ENCODE measurements at regions of chr5 and their contacts with region 1.

Region 1: GRCh38 chr5:76256116-76256889 is 146.8 kb upstream of the IQGAP2 start:
- DNase-seq: peak; percentile 47 to 84
- ATAC-seq: peak; percentile 89 to 100 (median 97)
- H3K4me3 ChIP-seq: no peak overlapping the region
- H3K4me3 Mint-ChIP-seq: no peak overlapping the region
- H3K27ac ChIP-seq: no peak overlapping the region
- H3K27ac Mint-ChIP-seq: peak overlapping the region in 1 of 2 donors; percentile 39
- H3K4me1 ChIP-seq: peaks cover 9% of the 10 kb centered on the region
- H3K4me1 Mint-ChIP-seq: no peaks in the 10 kb centered on the region
- H3K27me3 ChIP-seq: no peaks in the 10 kb centered on the region
- H3K27me3 Mint-ChIP-seq: peaks cover 3 to 10% of the 10 kb centered on the region in 2 donors
- CTCF ChIP-seq: peak; percentile 76

Region 2: DNA sequence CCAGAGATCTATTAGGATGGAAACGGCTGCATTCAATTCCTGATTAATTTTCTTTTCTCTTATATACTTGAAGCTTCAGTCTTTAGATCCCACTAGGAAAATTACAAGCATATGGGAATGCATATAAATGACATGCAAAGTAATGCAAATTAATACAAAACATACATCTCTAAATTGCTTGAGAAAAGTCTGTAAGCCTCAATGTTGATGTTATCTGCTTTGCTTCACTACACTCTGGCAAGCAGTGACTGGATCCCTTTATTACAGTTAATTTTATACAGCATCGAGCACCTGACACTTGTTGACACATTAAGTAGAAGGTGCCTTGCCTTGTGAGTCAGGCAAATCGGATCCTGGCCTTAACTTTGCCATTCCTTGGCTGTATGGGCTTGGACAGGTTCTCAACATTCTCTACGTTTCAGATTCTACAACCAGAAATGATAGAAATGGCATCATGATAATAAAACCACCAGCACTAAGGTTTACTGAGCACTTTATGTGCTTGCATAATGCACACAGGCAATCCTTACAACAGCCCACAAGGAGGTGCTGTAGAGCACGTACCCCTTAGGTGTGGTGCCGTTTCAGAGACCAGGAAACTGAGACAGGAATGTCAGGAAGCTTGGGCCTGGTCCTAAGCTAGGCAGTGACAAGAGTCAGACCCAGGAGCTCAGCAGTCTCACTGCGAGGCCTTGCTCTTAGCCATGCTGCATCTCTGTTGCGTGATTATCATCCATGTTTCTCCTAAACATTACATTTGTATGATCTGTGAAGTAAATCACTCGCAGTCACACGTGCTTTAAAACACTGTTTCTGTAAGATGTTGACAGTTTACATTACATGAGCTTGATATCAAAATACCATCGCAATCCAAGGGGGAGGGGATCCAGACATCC is 1206.6 kb before region 1 on chr5:
- intact Hi-C with region 1: loop called (anchors 2 kb)
- DNase-seq: peak; percentile 35 to 90
- ATAC-seq: peak; percentile 59 to 71 (median 60)
- H3K4me3 ChIP-seq: no peak overlapping the region
- H3K4me3 Mint-ChIP-seq: peak overlapping the region; percentile 22
- H3K27ac ChIP-seq: no peak overlapping the region
- H3K27ac Mint-ChIP-seq: peak overlapping the region in 1 of 2 donors; percentile 38
- H3K4me1 ChIP-seq: peaks cover 39% of the 10 kb centered on the region
- H3K4me1 Mint-ChIP-seq: peaks cover 39 to 54% of the 10 kb centered on the region in 2 donors
- H3K27me3 ChIP-seq: peaks cover 9% of the 10 kb centered on the region
- H3K27me3 Mint-ChIP-seq: peaks cover 25 to 35% of the 10 kb centered on the region in 2 donors
- CTCF ChIP-seq: peak; percentile 73

Region 3: DNA sequence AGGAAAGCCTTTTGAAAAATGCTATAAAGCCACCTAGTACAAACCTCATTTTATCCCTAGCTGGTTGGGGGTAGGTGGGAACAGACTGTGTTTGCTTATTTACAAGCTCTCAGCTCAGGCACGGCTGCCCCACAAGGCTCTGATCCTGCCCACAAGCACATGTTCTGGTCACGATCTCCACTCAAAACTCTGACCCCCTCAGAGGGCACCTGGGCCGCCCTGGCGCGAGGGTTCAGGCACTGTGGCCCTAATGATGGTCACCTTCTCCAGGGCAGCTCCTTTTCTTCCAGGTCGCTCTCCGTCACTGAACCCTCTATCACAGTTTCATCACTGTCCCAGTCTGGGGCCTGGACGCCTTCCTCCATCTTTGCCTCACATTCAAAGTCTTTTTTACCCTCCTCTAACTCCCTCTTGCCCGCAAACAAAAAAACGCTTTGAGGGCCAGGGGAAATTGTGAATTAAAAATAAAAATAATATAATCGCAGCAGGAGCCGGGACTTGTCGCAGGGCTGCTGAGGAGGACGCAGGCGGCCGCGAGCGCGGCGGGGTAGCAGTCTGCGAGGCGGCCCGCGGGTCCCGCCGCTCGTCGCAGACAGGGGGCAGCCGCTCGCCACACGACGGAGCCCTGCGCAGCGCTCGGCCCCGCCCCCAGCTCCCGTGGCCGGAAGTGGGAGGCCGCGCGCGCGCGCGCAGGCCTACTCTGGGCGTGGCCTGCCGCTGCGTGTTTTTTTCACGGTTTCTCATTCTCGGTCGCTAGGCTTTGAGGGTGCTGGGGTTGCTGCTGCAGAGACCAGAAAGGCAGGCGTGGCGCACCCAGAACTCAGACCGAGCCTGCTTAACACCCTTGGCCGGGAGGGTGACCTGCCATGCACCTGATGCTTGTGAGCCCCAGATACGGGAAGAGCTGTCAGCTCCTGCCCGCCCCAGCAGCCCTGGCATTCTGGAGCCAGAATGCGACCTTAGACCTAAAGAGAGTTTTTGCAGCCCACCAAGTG is 1019.7 kb before region 1 on chr5 and contains the start of gene ANKRD31:
- intact Hi-C with region 1: loop called (anchors 5 kb)
- DNase-seq: peak; percentile 92 to 96
- ATAC-seq: peak; percentile 98 to 100 (median 100)
- H3K4me3 ChIP-seq: peak within 1 kb of the TSS; percentile 64
- H3K4me3 Mint-ChIP-seq: peak within 1 kb of the TSS; percentile 89
- H3K27ac ChIP-seq: peak within 1 kb of the TSS; percentile 69
- H3K27ac Mint-ChIP-seq: peak within 1 kb of the TSS; percentile 79 to 90
- H3K4me1 ChIP-seq: peaks cover 9% of the 10 kb centered on the region
- H3K4me1 Mint-ChIP-seq: peaks cover 0 to 5% of the 10 kb centered on the region in 2 donors
- H3K27me3 ChIP-seq: peaks cover 4% of the 10 kb centered on the region
- H3K27me3 Mint-ChIP-seq: peaks cover 0 to 4% of the 10 kb centered on the region in 2 donors
- CTCF ChIP-seq: peak; percentile 94
- total RNA-seq, gene ANKRD31: 0.09 to 0.15 (median 0.12) TPM

Region 4: GRCh38 chr5:75734913-75735789 is 521.2 kb before region 1 on chr5:
- intact Hi-C with region 1: loop called (anchors 2 kb)
- DNase-seq: peak in 1 of 2 donors; percentile 49
- ATAC-seq: peak in 1 of 3 donors; percentile 48
- H3K4me3 ChIP-seq: no peak overlapping the region
- H3K4me3 Mint-ChIP-seq: no peak overlapping the region
- H3K27ac ChIP-seq: no peak overlapping the region
- H3K27ac Mint-ChIP-seq: no peak overlapping the region
- H3K4me1 ChIP-seq: no peaks in the 10 kb centered on the region
- H3K4me1 Mint-ChIP-seq: no peaks in the 10 kb centered on the region
- H3K27me3 ChIP-seq: no peaks in the 10 kb centered on the region
- H3K27me3 Mint-ChIP-seq: peaks cover 10 to 21% of the 10 kb centered on the region in 2 donors
- CTCF ChIP-seq: no peak

Region 5: GRCh38 chr5:75885849-75886598 is 370.3 kb before region 1 on chr5:
- intact Hi-C with region 1: loop called (anchors 10 kb)
- DNase-seq: peak in 1 of 2 donors; percentile 10
- ATAC-seq: no peak
- H3K4me3 ChIP-seq: no peak overlapping the region
- H3K4me3 Mint-ChIP-seq: no peak overlapping the region
- H3K27ac ChIP-seq: no peak overlapping the region
- H3K27ac Mint-ChIP-seq: no peak overlapping the region
- H3K4me1 ChIP-seq: no peaks in the 10 kb centered on the region
- H3K4me1 Mint-ChIP-seq: no peaks in the 10 kb centered on the region
- H3K27me3 ChIP-seq: no peaks in the 10 kb centered on the region
- H3K27me3 Mint-ChIP-seq: peaks cover 0 to 4% of the 10 kb centered on the region in 2 donors
- CTCF ChIP-seq: no peak

Region 6: DNA sequence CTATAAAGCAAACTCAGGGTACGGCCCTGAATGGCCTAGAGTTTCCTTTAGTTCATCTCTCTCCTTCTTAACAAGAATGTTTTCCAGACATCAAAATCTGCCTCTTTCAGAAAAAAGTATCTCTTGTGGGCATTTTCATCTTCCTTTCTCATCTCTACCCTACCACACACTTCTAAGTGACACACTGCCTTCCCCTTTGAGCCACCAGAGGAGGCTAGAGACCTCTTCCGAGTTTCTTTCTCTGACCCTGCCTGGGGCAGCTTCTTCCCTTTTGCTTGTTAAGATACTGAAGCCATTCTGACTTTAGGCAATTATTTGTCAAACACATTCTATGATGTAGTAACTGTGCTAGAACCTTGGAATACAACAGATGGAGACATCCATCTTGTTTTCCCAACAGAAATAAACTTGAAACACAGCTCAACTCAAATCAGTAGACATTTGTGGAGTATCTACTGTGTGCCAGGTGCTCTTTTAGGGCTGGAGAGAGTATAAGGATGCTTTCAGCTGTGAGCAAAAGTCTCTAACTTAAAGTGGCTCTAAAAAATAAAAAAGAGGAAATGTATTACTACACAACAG is 181.7 kb before region 1 on chr5:
- intact Hi-C with region 1: loop called (anchors 1 kb)
- DNase-seq: peak in 1 of 2 donors; percentile 56
- ATAC-seq: peak; percentile 58 to 63 (median 62)
- H3K4me3 ChIP-seq: no peak overlapping the region
- H3K4me3 Mint-ChIP-seq: no peak overlapping the region
- H3K27ac ChIP-seq: no peak overlapping the region
- H3K27ac Mint-ChIP-seq: no peak overlapping the region
- H3K4me1 ChIP-seq: no peaks in the 10 kb centered on the region
- H3K4me1 Mint-ChIP-seq: no peaks in the 10 kb centered on the region
- H3K27me3 ChIP-seq: peaks cover 3% of the 10 kb centered on the region
- H3K27me3 Mint-ChIP-seq: peaks cover 60 to 87% of the 10 kb centered on the region in 2 donors
- CTCF ChIP-seq: peak; percentile 45